ENCODE measurements at regions of chr5 and their contacts with region 1.

Region 1: GRCh38 chr5:97874491-97874890 is 691.4 kb upstream of the RIOK2 start:
- DNase-seq: peak; percentile 45
- H3K4me3 ChIP-seq: no peak overlapping the region
- H3K27me3 ChIP-seq: no peaks in the 10 kb centered on the region
- CTCF ChIP-seq: no peak

Region 2: GRCh38 chr5:97735209-97735608 is 139.3 kb before region 1 on chr5:
- CTCF ChIA-PET with region 1: no interaction called
- POLR2A ChIA-PET with region 1: no interaction called
- DNase-seq: peak; percentile 39
- H3K4me3 ChIP-seq: no peak overlapping the region
- H3K27me3 ChIP-seq: no peaks in the 10 kb centered on the region
- CTCF ChIP-seq: no peak

Region 3: DNA sequence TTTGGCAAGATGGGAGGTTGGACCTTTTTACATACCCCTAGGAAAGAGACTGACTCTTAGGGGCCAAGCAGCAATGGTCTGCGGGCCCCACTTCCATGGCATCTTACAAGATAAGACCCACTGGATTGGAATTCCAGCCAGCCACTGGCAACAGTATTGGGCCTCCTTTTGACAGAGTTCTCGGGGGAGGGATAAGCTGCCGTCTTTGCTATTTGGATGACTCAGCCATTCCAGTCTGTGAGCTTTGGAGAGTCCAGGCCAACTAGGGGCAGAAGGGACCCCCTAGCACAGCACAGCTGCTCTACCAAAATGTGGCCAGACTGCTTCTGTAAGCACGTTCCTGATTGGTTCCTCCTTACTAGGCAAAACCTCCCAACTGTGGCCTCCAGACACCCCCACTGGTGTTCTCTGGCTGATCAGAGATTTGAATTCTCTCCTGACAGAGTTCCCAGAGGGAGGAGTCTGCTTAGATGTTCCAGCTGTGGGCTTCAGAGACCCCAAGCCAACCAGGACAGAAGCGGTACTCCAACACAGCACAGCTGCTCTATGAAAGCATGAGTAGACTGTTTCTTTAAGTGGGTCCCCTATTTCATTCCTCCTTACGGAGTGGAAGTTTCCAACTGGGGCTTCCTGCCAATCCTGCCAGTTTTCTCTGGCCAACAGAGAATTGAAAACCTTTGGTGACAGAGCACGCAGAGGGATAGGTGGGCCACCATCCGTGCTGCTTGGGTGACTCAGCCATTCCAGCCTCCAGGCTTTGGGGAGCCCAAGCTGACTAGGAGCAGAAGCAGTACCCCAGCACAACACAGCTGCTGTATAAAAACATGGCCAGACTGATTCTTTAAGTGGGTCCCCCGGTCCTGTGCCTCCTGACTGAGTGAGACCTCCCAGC is 19.4 kb before region 1 on chr5:
- CTCF ChIA-PET with region 1: no interaction called
- POLR2A ChIA-PET with region 1: interaction called, 14 read pairs
- DNase-seq: no peak
- H3K4me3 ChIP-seq: no peak overlapping the region
- H3K27me3 ChIP-seq: no peaks in the 10 kb centered on the region
- CTCF ChIP-seq: no peak

Region 4: GRCh38 chr5:98563850-98564249 is 689.4 kb after region 1 on chr5:
- CTCF ChIA-PET with region 1: no interaction called
- POLR2A ChIA-PET with region 1: no interaction called
- DNase-seq: no peak
- H3K4me3 ChIP-seq: no peak overlapping the region
- H3K27me3 ChIP-seq: no peaks in the 10 kb centered on the region
- CTCF ChIP-seq: no peak

Measured in BJ (cell line).